IMR-90 (cell line): ENCODE measurements at regions of chr20 and their contacts with region 1.

Region 1: DNA sequence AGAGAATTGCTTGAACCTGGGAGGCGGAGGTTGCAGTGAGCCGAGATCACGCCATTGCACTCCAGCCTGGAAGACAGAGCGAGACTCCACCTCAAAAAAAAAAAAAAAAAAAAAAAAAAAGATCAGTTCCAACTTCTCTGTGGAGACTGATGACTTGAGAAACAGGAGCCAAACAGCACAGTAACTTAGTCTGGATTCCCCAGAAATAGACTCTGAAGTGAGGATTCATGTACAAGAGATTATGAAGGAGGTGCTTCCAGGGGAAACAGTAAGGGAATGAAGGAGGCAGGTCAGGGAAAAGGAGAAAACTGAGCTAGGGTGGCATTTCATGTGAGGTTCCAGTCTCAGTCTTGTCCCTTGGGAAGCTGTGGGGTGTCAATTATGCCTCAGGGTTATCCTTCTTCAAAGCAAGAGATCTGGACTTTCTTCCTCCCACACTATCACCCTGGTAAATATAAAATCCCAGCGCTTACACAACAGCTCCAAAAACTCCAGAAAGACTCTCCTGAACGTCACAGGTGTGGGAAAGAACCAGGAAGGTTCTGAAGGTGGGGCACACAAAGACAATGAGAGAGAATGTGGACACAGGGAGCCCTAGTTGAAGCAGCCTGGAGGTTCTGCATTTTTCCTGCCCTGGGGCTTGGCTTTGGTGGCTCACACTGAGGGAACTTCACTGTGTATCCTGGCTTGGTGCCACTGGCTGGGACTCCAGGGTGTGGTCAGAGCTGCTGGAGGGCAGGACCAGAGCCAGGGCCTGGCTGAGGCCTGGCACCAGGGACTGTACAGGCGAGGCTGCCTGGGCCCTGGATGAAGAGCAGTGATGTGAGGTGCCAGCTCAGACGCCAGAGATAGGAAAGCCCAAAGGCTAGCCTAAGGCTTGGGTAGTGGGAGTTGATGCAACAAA is 46.8 kb downstream of the PCNA start:
- DNase-seq: peak; percentile 22
- ATAC-seq: peak; percentile 79
- H3K4me3 ChIP-seq: no peak overlapping the region
- H3K27ac ChIP-seq: no peak overlapping the region
- H3K4me1 ChIP-seq: peaks cover 10% of the 10 kb centered on the region
- H3K27me3 ChIP-seq: no peaks in the 10 kb centered on the region
- CTCF ChIP-seq: no peak
- POLR2A ChIP-seq: no peak
- RAD21 ChIP-seq: no peak

Region 2: DNA sequence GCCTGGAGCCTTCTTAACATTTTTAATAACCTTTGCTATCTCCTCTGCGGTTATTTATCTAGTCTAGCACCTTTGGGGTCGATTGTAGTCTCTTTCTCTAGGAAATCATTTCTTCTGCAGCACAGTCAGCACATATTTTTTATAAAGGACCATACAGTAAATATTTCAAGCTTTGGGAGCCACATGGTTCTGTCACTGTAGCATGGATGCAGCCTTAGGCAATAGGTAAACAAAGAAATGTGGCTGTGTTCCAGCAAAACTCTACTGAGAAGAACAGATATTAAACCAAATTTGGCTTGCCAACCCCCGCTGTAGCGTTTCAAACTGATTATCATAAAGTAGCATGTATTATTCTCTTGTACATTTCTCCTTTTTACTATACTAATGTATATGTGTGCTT is 167.4 kb before region 1 on chr20:
- CTCF ChIA-PET with region 1: no interaction called
- POLR2A ChIA-PET with region 1: no interaction called
- dilution Hi-C with region 1: no loop called
- in situ Hi-C with region 1: no loop called
- intact Hi-C with region 1: no loop called
- DNase-seq: peak; percentile 49
- ATAC-seq: peak; percentile 71
- H3K4me3 ChIP-seq: no peak overlapping the region
- H3K27ac ChIP-seq: no peak overlapping the region
- H3K4me1 ChIP-seq: peaks cover 5% of the 10 kb centered on the region; the same call in 1 of the 2 replicates
- H3K27me3 ChIP-seq: no peaks in the 10 kb centered on the region
- CTCF ChIP-seq: no peak
- POLR2A ChIP-seq: no peak
- RAD21 ChIP-seq: no peak

Region 3: DNA sequence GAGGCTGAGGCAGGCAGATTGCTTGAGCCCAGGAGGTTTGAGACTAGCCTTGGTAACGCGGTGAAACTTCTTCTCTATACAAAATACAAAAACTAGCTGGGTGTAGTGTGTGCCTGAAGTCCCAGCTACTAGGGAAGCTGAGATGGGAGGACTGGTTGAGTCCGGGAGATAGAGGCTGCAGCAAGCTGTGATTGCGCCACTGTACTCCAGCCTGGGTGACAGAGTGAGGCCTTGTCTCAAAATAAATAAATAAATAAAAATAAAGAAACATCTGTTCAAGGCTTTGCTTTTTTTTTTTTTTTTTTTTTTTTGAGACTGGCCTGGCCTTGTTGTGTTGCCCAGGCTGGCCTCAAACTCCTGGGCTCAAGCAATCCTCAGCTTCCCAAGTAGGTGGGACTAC is 48.0 kb before region 1 on chr20:
- CTCF ChIA-PET with region 1: no interaction called
- POLR2A ChIA-PET with region 1: no interaction called
- dilution Hi-C with region 1: no loop called
- in situ Hi-C with region 1: no loop called
- intact Hi-C with region 1: no loop called
- DNase-seq: no peak
- ATAC-seq: no peak
- H3K4me3 ChIP-seq: no peak overlapping the region
- H3K27ac ChIP-seq: no peak overlapping the region
- H3K4me1 ChIP-seq: no peaks in the 10 kb centered on the region; the same call in 1 of the 2 replicates
- H3K27me3 ChIP-seq: no peaks in the 10 kb centered on the region
- CTCF ChIP-seq: no peak
- POLR2A ChIP-seq: no peak
- RAD21 ChIP-seq: no peak

Region 4: GRCh38 chr20:5119435-5120188 is 46.6 kb after region 1 on chr20 and contains the start of gene PCNA:
- CTCF ChIA-PET with region 1: no interaction called
- POLR2A ChIA-PET with region 1: interaction called, 32 read pairs
- dilution Hi-C with region 1: no loop called
- in situ Hi-C with region 1: no loop called
- intact Hi-C with region 1: no loop called
- DNase-seq: peak; percentile 96
- ATAC-seq: peak; percentile 96
- H3K4me3 ChIP-seq: peak within 1 kb of the TSS; percentile 70
- H3K27ac ChIP-seq: peak within 1 kb of the TSS; percentile 99
- H3K4me1 ChIP-seq: peaks cover 2% of the 10 kb centered on the region
- H3K27me3 ChIP-seq: no peaks in the 10 kb centered on the region
- CTCF ChIP-seq: no peak
- POLR2A ChIP-seq: peak; percentile 95
- RAD21 ChIP-seq: no peak
- total RNA-seq, gene PCNA: 155 and 222 TPM in 2 replicates